HEK293 (cell line): ENCODE measurements at regions of chr21 and their contacts with region 1.

Region 1: DNA sequence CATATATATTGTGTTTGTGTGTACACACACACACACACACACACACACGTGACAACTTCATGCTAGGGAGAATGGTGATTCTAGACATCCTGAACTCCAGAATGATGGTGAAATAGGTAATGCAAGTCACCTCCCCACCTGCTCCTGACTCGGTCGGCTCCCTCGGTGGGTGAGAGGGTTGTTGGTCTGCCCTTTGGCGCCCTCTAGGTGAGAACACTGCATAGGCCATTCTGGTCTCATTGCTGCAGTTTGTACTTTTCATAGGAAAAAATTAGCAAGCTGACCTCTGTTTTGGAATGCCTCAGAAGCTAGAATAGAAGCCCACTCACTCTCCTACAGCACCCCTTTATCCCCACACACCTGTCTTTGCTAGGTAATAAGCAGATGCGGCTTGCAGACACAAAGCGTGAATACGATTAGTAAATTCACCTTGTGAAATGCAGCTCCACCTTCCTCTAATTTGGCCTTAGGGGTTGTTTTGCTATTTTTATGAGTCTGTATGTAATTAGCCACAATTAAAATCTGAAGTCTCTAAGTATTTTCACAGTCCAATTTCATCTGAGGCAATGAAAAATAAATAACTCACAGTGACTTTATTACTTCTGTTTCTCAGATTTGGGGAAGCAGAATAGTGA is 130.0 kb upstream of the KCNJ15 start:
- H3K4me3 ChIP-seq: no peak overlapping the region
- H3K27ac ChIP-seq: no peak overlapping the region
- H3K4me1 ChIP-seq: no peaks in the 10 kb centered on the region
- CTCF ChIP-seq: peak; percentile 68

Region 2: GRCh38 chr21:37682966-37683365 is 443.8 kb before region 1 on chr21:
- CTCF ChIA-PET with region 1: no interaction called
- POLR2A ChIA-PET with region 1: no interaction called
- H3K4me3 ChIP-seq: no peak overlapping the region
- H3K27ac ChIP-seq: no peak overlapping the region
- H3K4me1 ChIP-seq: no peaks in the 10 kb centered on the region
- CTCF ChIP-seq: no peak

Region 3: GRCh38 chr21:37700641-37701202 is 426.1 kb before region 1 on chr21:
- CTCF ChIA-PET with region 1: interaction called, 10 read pairs
- POLR2A ChIA-PET with region 1: no interaction called
- H3K4me3 ChIP-seq: no peak overlapping the region
- H3K27ac ChIP-seq: no peak overlapping the region
- H3K4me1 ChIP-seq: no peaks in the 10 kb centered on the region
- CTCF ChIP-seq: peak; percentile 76

Region 4: GRCh38 chr21:37758982-37759381 is 367.8 kb before region 1 on chr21:
- CTCF ChIA-PET with region 1: interaction called, 15 read pairs
- POLR2A ChIA-PET with region 1: no interaction called
- H3K4me3 ChIP-seq: no peak overlapping the region
- H3K27ac ChIP-seq: no peak overlapping the region
- H3K4me1 ChIP-seq: no peaks in the 10 kb centered on the region
- CTCF ChIP-seq: peak; percentile 84

Region 5: DNA sequence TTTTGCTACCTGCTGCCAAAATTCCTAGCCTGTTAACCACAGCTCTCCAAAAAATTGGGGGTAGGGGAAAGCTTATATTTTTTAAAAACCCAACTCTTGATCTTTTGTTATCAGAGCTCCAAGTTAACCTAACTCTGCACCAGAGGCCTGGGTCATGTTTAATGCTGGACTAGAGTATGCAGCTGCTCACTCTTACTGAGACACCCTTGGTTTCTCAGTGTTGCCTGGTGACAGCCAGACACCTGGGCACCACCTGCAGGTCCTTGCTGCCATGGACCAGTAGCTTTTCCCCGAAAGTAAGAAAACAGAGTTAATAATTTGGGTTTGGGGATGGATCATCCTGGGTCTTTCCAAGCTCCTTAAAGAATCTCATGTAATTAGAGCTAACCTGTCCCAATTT is 240.7 kb before region 1 on chr21:
- CTCF ChIA-PET with region 1: no interaction called
- POLR2A ChIA-PET with region 1: no interaction called
- H3K4me3 ChIP-seq: no peak overlapping the region
- H3K27ac ChIP-seq: no peak overlapping the region
- H3K4me1 ChIP-seq: no peaks in the 10 kb centered on the region
- CTCF ChIP-seq: no peak

Region 6: DNA sequence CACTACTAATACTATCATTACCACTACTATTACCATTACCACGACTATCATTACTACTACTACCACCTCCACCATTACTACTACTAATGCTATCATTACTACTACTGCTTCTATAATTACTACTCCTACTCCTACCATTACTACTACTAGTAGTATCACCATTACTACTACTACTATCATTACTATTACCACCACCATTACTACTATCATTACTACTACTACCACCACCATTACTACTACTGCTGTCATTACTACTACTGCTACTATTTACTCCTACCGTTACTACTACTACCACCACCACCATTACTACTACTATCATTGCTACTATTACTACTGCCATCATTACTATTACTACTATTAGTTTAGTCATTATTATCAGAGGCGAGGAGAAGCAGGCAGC is 10.9 kb before region 1 on chr21:
- CTCF ChIA-PET with region 1: interaction called, 12 read pairs
- POLR2A ChIA-PET with region 1: no interaction called
- H3K4me3 ChIP-seq: no peak overlapping the region
- H3K27ac ChIP-seq: no peak overlapping the region
- H3K4me1 ChIP-seq: no peaks in the 10 kb centered on the region
- CTCF ChIP-seq: no peak

Region 7: GRCh38 chr21:38159355-38159754 is 32.6 kb after region 1 on chr21:
- CTCF ChIA-PET with region 1: interaction called, 11 read pairs
- POLR2A ChIA-PET with region 1: no interaction called
- H3K4me3 ChIP-seq: no peak overlapping the region
- H3K27ac ChIP-seq: no peak overlapping the region
- H3K4me1 ChIP-seq: no peaks in the 10 kb centered on the region
- CTCF ChIP-seq: peak; percentile 37